Cardiac septum (tissue), 1 donor: ENCODE measurements at regions of chr10 and their contacts with region 1.

Region 1: DNA sequence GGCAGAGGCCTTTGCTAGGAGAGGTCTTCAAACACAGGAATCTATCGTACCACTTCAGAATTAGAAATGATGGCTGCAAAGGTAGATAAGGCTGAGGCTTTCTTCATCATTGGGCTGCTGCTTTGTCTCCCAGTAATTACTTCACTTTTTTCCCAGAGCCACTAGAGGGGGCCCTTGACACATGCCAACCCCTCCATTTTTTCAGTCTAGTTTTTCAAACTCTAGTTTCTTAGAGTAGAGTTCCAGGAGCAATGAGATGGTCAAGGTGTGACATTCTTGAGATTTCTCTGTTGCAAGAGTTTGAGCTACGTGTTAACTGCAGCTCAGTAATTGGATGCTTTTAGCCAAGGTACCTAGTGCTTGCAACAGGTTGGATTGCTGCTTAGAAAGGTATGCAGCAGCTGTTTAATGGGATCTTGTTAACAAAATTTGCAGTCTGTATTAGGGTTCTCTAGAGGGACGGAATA is 33.8 kb upstream of the RBM20 start:
- DNase-seq: no peak

Region 2: GRCh38 chr10:110681023-110681681 is 70.8 kb after region 1 on chr10:
- intact Hi-C with region 1: loop called (anchors 5 kb)
- DNase-seq: no peak

Region 3: DNA sequence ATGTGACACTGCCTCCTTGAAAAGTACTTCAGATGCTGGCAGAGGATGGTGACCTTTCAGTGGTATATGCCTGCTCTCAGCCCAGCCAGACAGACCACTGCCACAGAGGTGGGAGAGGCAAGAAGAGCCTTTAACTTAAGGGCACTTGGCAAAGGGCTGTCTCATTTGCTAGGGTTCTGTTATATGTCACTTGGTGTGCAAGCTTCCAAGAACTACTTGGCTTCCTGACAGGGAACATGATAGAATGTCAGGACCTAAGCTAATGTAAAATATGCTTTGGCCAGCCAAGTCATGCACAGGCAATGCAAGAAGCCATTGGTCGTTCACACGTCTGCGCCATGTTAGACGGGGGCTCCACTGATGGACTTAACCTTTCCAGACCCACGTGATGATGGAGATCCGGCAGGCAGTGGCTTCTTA is 88.5 kb after region 1 on chr10:
- intact Hi-C with region 1: no loop called
- DNase-seq: no peak